ENCODE measurements at regions of chr7 and their contacts with region 1.

Region 1: DNA sequence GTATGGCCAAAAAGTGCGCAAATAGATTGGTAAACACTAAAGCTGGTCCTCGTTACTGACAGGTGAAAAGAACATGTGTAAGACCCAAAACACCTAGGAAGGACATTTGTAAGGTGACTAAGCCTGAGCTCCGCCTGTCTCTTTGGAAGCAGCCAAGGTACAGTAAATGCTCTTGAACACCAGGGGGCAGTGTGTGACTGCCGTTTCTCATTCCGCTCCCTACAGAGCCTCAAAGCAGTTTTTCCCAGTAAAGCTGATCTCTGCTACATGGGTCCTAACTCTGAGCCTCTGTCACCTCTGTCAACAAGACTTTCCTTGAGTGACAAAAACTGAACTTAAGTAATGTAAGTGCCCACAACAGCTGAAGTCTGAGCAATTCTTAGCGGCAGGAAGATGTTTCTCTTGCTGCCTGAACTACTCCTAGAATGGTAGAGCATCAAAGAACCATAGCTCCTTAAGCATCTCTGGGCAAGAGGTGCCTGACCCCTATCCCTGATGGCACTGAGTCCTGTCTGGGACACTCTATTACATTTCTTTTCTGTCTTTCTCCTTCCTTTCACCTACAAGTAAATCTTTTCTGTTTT is 238.0 kb upstream of the INHBA start:
- DNase-seq: peak; percentile 62
- H3K4me3 Mint-ChIP-seq: no peak overlapping the region
- H3K27ac Mint-ChIP-seq: no peak overlapping the region
- H3K4me1 Mint-ChIP-seq: peaks cover 5% of the 10 kb centered on the region
- H3K27me3 Mint-ChIP-seq: peaks cover 32% of the 10 kb centered on the region

Region 2: GRCh38 chr7:41661596-41661995 is 279.3 kb before region 1 on chr7:
- CTCF ChIA-PET with region 1: no interaction called
- DNase-seq: no peak
- H3K4me3 Mint-ChIP-seq: no peak overlapping the region
- H3K27ac Mint-ChIP-seq: no peak overlapping the region
- H3K4me1 Mint-ChIP-seq: no peaks in the 10 kb centered on the region
- H3K27me3 Mint-ChIP-seq: no peaks in the 10 kb centered on the region

Region 3: DNA sequence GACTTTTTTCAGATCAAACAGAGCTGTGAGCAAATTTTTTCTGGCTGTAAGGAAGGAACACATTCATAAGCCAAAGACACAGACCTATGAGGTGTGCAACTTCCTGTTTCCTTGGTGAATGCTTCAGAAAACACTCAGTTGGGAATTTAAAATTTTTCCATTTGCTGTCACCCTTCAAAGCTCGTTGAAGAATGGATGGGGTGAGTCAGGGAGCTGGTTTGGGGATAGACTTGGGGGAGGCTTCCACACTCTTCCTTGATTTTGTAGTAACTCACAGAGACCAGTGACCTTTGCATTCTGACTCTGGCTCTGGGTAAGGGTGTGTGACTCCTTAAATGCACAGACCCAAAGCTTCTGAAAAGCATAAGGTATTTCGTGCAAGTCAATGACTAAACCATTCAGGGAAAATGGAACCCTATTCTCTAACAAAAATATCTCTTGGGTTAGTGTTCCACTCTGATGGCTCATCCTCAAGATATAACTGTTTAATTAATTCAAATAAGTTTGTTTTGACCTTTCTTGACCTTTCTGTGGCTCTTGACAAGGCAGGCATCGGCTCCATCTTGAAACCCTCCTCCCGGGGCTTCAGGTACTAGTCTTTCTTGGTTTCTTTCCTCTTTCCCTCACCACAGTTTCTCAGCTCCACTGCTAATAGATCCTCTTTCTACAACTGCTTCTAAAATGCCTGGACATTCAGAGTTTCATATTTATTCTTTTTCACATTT is 10.2 kb before region 1 on chr7:
- CTCF ChIA-PET with region 1: interaction called, 11 read pairs
- DNase-seq: no peak
- H3K4me3 Mint-ChIP-seq: no peak overlapping the region
- H3K27ac Mint-ChIP-seq: no peak overlapping the region
- H3K4me1 Mint-ChIP-seq: no peaks in the 10 kb centered on the region
- H3K27me3 Mint-ChIP-seq: peaks cover 19% of the 10 kb centered on the region

Region 4: GRCh38 chr7:41955893-41956675 is 15.2 kb after region 1 on chr7:
- CTCF ChIA-PET with region 1: interaction called, 14 read pairs
- DNase-seq: no peak
- H3K4me3 Mint-ChIP-seq: no peak overlapping the region
- H3K27ac Mint-ChIP-seq: no peak overlapping the region
- H3K4me1 Mint-ChIP-seq: no peaks in the 10 kb centered on the region
- H3K27me3 Mint-ChIP-seq: peaks cover 38% of the 10 kb centered on the region

Region 5: GRCh38 chr7:42876182-42877068 is 935.6 kb after region 1 on chr7:
- CTCF ChIA-PET with region 1: interaction called, 22 read pairs
- DNase-seq: peak; percentile 65
- H3K4me3 Mint-ChIP-seq: no peak overlapping the region
- H3K27ac Mint-ChIP-seq: no peak overlapping the region
- H3K4me1 Mint-ChIP-seq: no peaks in the 10 kb centered on the region
- H3K27me3 Mint-ChIP-seq: peaks cover 13% of the 10 kb centered on the region